Activated CD8-positive, alpha-beta T cell treated with anti-CD3 and anti-CD28 coated beads, Interleukin-2, amount 10 ng/mL, durations not matched to agents 7 days and 5 days (primary cell): ENCODE measurements at regions of chr17 and their contacts with region 1.

Region 1: GRCh38 chr17:16232391-16232790 is 15.4 kb downstream of the PIGL start:
- DNase-seq: no peak
- ATAC-seq: no peak
- H3K4me3 Mint-ChIP-seq: no peak overlapping the region
- H3K27ac Mint-ChIP-seq: no peak overlapping the region
- H3K4me1 Mint-ChIP-seq: peaks cover 19% of the 10 kb centered on the region
- H3K27me3 Mint-ChIP-seq: no peaks in the 10 kb centered on the region

Region 2: GRCh38 chr17:16120937-16121336 is 111.5 kb before region 1 on chr17:
- CTCF ChIA-PET with region 1: no interaction called
- POLR2A ChIA-PET with region 1: no interaction called
- DNase-seq: no peak
- ATAC-seq: no peak
- H3K4me3 Mint-ChIP-seq: no peak overlapping the region
- H3K27ac Mint-ChIP-seq: no peak overlapping the region
- H3K4me1 Mint-ChIP-seq: no peaks in the 10 kb centered on the region
- H3K27me3 Mint-ChIP-seq: no peaks in the 10 kb centered on the region

Region 3: GRCh38 chr17:16215273-16215964 is 17.0 kb before region 1 on chr17 and contains the start of gene NCOR1:
- CTCF ChIA-PET with region 1: no interaction called
- POLR2A ChIA-PET with region 1: interaction called, 10 read pairs
- DNase-seq: peak; percentile 93
- ATAC-seq: peak; percentile 88
- H3K4me3 Mint-ChIP-seq: peak within 1 kb of the TSS; percentile 84
- H3K27ac Mint-ChIP-seq: peak within 1 kb of the TSS; percentile 85
- H3K4me1 Mint-ChIP-seq: peaks cover 48% of the 10 kb centered on the region
- H3K27me3 Mint-ChIP-seq: no peaks in the 10 kb centered on the region
- total RNA-seq, gene NCOR1: 160 to 161 TPM

Region 4: GRCh38 chr17:16322636-16323035 is 90.2 kb after region 1 on chr17:
- CTCF ChIA-PET with region 1: no interaction called
- POLR2A ChIA-PET with region 1: no interaction called
- DNase-seq: no peak
- ATAC-seq: no peak
- H3K4me3 Mint-ChIP-seq: no peak overlapping the region
- H3K27ac Mint-ChIP-seq: no peak overlapping the region
- H3K4me1 Mint-ChIP-seq: no peaks in the 10 kb centered on the region
- H3K27me3 Mint-ChIP-seq: no peaks in the 10 kb centered on the region

Region 5: DNA sequence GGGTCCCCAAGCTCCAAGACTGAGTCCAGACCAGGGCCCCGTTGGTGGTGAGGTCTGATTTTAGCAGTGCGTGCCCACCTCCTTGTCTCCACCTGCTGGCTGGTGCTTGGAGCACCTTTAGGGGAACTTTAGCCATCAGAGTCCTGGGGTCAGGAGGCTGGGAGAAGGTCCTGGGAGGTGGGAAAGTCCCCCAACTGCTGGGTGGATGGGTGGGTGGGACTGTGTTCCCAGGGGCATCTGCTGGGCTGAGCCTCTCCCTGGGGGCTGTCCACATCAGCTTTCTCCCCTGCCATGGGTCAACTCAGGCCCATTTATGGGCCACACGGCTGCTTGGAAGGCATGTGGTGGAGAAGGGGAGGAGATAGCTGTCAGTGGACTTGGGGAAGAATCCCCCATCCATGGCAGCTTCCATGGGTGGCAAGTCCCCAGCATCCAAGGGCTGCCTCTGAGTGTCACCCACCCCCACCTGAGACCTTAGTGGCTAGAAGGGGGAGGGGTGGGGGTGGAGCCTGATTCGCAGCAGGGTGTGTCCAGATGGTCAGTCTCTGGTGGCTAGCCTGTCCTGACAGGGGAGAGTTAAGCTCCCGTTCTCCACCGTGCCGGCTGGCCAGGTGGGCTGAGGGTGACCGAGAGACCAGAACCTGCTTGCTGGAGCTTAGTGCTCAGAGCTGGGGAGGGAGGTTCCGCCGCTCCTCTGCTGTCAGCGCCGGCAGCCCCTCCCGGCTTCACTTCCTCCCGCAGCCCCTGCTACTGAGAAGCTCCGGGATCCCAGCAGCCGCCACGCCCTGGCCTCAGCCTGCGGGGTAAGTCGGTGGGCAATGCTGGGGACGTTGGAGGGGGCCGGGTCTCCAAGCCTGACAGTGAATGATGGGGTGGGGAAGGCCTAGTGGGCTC is 182.9 kb after region 1 on chr17 and contains the start of gene TRPV2:
- CTCF ChIA-PET with region 1: no interaction called
- POLR2A ChIA-PET with region 1: no interaction called
- DNase-seq: peak; percentile 78
- ATAC-seq: peak; percentile 55
- H3K4me3 Mint-ChIP-seq: peak within 1 kb of the TSS; percentile 99
- H3K27ac Mint-ChIP-seq: peak within 1 kb of the TSS; percentile 100
- H3K4me1 Mint-ChIP-seq: peaks cover 46% of the 10 kb centered on the region
- H3K27me3 Mint-ChIP-seq: no peaks in the 10 kb centered on the region
- total RNA-seq, gene TRPV2: 124 to 134 TPM